H1 (cell line): ENCODE measurements at regions of chr7 and their contacts with region 1.

Region 1: GRCh38 chr7:119197877-119198527 is 973.5 kb downstream of the ANKRD7 start:
- DNase-seq: peak; percentile 31 to 67
- H3K4me3 ChIP-seq: no peak overlapping the region
- H3K27ac ChIP-seq: no peak overlapping the region
- H3K4me1 ChIP-seq: no peaks in the 10 kb centered on the region
- H3K27me3 ChIP-seq: no peaks in the 10 kb centered on the region
- CTCF ChIP-seq: peak; percentile 59 to 84 (median 63)
- EP300 ChIP-seq: no peak
- POLR2A ChIP-seq: no peak
- RAD21 ChIP-seq: peak; percentile 77 to 83

Region 2: DNA sequence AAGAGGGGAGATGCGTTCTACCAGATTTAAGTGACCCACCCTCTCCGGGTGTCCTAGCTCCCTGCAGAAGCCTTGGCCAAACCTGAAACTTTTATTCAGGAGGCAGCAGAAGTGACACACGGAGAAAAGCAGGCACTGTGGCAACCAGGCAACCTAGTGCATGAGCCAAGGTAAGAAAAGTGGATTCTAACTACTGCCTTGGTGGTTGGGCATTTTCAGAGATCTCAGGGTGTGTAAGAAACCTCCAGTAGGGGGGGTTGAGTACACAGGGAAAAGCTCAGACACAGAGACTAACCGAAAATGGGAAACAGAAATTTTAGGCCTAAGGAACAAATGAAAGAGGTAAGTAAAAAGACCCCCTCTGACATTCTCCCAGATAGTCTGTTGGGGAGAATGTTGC is 327.8 kb before region 1 on chr7:
- CTCF ChIA-PET with region 1: interaction called, 21 read pairs
- POLR2A ChIA-PET with region 1: no interaction called
- DNase-seq: peak in 1 of 2 experiments; percentile 47
- H3K4me3 ChIP-seq: no peak overlapping the region
- H3K27ac ChIP-seq: no peak overlapping the region
- H3K4me1 ChIP-seq: peaks cover 0 to 3% (median 0%) of the 10 kb centered on the region in 4 experiments; a peak in 1 of 7 replicates
- H3K27me3 ChIP-seq: no peaks in the 10 kb centered on the region
- CTCF ChIP-seq: peak in 2 of 3 experiments; percentile 58; a peak in 3 of 4 replicates
- EP300 ChIP-seq: no peak
- POLR2A ChIP-seq: no peak
- RAD21 ChIP-seq: peak; percentile 74 to 81

Region 3: DNA sequence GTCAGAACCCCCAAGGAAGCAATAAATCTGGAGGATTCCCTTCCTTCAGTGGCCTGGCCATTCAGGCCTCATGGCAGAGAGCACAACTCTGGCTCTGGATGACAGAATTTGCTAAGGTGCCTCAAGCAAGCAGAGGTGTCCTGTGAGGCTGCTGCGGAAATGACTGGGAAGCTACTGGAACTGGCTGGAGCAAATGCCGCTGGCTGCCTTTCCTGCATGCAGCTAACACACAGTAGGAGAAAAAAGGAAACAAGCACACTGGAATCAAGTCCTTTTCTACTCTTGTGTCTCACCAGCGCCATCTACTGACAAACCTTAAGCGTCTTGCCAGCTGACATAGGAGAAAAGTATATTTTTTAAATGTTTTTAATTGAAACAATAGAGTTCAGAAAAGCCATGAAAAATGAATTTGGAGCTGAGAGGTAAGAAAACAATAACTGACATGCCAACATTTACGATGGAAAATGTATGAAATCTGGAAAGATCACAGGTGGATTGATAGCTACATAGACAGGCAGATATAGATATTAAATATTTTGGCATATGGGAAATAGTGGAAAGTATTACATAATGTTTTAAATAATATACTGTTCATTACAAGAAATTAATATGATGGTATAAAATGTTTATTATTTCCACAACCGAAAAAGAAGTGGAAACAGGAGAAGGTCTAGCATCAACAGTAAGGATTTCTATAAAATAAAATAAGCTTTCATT is 21.9 kb before region 1 on chr7:
- CTCF ChIA-PET with region 1: interaction called, 40 read pairs
- POLR2A ChIA-PET with region 1: no interaction called
- DNase-seq: peak; percentile 65 to 82
- H3K4me3 ChIP-seq: no peak overlapping the region
- H3K27ac ChIP-seq: no peak overlapping the region
- H3K4me1 ChIP-seq: peaks cover 0 to 5% (median 2%) of the 10 kb centered on the region in 4 experiments; a peak in 5 of 7 replicates
- H3K27me3 ChIP-seq: no peaks in the 10 kb centered on the region
- CTCF ChIP-seq: peak in 2 of 3 experiments; percentile 68 to 79; a peak in 3 of 4 replicates
- EP300 ChIP-seq: no peak
- POLR2A ChIP-seq: no peak
- RAD21 ChIP-seq: peak; percentile 90 to 92

Region 4: GRCh38 chr7:119184124-119184788 is 13.7 kb before region 1 on chr7:
- CTCF ChIA-PET with region 1: interaction called, 80 read pairs
- POLR2A ChIA-PET with region 1: no interaction called
- DNase-seq: no peak
- H3K4me3 ChIP-seq: no peak overlapping the region
- H3K27ac ChIP-seq: no peak overlapping the region
- H3K4me1 ChIP-seq: no peaks in the 10 kb centered on the region; a peak in 1 of 7 replicates
- H3K27me3 ChIP-seq: no peaks in the 10 kb centered on the region
- CTCF ChIP-seq: no peak
- EP300 ChIP-seq: no peak
- POLR2A ChIP-seq: no peak
- RAD21 ChIP-seq: no peak